ENCODE measurements at regions of chr18 and their contacts with region 1.

Region 1: GRCh38 chr18:62784966-62785413 is 69.6 kb downstream of the PHLPP1 start:
- DNase-seq: no peak
- ATAC-seq: peak; percentile 15
- H3K4me3 ChIP-seq: no peak overlapping the region
- H3K4me1 ChIP-seq: peaks cover 10% of the 10 kb centered on the region
- CTCF ChIP-seq: no peak

Region 2: DNA sequence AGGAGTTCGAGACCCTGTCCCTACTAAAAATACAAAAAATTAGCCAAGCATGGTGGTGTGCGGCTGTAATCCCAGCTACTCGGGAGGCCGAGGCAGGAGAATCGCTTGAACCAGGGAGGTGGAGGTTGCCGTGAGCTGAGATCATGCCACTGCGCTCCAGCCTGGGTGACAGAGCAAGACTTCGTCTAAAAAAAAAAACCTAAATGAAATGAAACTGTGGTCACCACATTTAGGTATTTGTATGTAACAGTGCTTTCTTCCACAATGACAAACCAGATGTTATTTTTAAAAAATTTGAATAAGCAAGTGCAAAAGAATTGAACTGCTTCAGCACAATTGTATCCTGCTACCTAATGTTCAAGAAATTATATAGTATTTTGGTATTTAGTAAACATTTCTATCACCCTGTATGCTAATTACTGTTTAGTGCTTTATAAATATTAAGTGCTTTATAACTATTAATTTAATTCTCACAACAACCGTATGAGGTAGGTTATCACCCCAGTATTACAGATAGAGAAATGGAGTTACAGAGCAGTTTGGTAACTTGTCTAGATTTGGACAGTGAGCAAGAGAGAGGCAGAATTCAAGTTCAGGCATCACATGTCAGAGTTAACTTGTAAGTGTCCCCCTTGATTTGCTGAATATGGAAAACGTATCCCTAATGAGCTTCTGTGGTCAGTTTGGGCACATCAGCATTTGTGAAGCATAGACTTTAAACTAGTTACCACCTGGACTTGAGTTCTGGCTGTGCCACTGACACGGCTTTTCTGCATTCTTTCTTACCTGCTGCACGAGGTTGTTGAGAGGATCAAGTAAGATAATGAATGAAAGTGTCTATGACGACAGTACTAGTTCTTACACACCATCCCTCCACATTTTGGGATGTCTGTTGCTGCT is 55.3 kb before region 1 on chr18:
- intact Hi-C with region 1: loop called in 1 of 2 experiments (anchors 10 kb)
- DNase-seq: no peak
- ATAC-seq: no peak
- H3K4me3 ChIP-seq: no peak overlapping the region
- H3K4me1 ChIP-seq: no peaks in the 10 kb centered on the region
- CTCF ChIP-seq: no peak

Measured in mucosa of descending colon (tissue), 3 donors.